ENCODE measurements at regions of chr4 and their contacts with region 1.

Region 1: DNA sequence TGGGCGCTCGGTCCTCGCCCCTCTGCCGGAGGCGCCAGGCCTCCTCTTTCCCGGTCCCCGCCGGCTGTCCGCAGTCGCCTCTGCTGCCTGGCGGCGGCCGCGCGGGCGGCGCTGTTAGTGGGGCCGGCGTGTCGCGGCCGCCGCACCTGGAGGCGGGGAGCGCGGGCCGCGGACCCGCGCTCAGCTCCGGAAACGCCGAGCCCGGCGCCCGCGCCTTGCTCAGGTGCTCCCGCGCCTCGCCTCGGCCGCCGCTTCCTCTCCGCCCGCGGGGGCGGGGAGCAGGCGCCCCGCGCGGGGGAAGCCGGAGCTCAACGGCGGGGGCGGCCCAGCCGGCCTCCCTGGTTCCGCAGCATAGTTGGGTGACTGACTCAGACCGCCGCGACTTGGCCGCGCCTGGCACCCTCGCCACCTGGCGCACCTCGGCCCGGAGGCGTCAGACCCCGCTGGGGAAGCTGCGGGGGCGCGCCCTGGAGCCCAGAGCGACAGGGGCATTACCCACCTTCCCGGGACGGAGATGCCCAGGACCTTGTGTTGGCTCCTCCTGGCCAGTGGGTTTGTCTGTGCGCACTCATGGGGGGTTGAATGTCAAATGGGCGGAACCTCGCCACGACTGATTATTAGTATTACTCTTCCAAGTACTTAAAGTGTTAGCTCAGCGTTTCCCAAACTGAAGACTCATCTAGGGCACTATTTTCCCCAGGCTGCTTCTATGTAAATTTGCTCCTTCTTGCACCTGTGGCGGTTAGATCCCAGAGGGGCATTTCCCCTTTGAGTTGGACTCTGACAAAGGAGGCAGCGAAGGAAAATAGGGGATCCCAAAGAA is at the start of gene ARAP2:
- DNase-seq: peak; percentile 84
- ATAC-seq: peak; percentile 72
- H3K4me3 Mint-ChIP-seq: peak within 1 kb of the TSS; percentile 87
- H3K27ac Mint-ChIP-seq: peak within 1 kb of the TSS; percentile 93
- H3K4me1 Mint-ChIP-seq: peaks cover 36% of the 10 kb centered on the region
- H3K27me3 Mint-ChIP-seq: no peaks in the 10 kb centered on the region
- total RNA-seq, gene ARAP2: 40.0 to 42.5 TPM

Region 2: DNA sequence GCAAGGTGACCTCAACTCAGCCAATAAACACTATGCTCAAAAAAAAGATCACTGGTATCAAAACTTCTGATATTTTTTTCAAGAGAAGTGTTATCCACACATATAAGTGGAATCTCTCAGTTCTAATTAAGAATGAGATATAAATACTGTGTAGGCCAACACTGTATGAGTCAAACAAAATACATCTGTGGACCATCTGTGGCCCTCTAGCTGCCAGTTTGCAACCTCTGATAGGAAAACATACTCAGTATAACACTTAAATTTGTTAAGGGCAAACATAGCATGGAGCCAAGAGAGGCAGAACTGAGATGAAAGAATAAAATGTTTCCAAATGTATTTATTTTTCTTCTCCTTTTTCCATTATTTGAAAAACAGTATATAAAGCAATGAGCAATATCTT is 377.4 kb before region 1 on chr4:
- CTCF ChIA-PET with region 1: no interaction called
- POLR2A ChIA-PET with region 1: no interaction called
- intact Hi-C with region 1: no loop called
- DNase-seq: no peak
- ATAC-seq: no peak
- H3K4me3 Mint-ChIP-seq: no peak overlapping the region
- H3K27ac Mint-ChIP-seq: no peak overlapping the region
- H3K4me1 Mint-ChIP-seq: no peaks in the 10 kb centered on the region
- H3K27me3 Mint-ChIP-seq: no peaks in the 10 kb centered on the region

Region 3: DNA sequence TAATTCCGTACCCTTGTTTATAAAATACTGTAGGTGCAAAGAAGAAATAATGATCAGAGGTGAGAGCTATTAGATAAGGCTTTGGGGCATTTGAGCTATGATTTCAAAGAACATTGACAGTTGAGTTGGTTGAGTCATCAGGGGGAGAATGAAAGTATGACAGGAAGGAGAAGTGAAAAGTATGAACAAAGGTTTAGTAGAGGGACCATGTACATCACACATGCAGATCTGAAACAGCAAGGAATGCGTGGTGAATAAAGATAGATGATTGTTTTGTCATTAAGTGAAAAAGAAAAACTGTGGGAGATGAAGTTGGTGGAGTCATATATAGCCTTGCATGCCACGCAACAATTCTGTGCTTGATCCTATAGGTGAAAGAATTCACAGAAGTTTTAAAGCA is 163.3 kb before region 1 on chr4:
- CTCF ChIA-PET with region 1: no interaction called
- POLR2A ChIA-PET with region 1: no interaction called
- intact Hi-C with region 1: loop called (anchors 5 kb)
- DNase-seq: peak; percentile 29
- ATAC-seq: peak; percentile 97
- H3K4me3 Mint-ChIP-seq: no peak overlapping the region
- H3K27ac Mint-ChIP-seq: no peak overlapping the region
- H3K4me1 Mint-ChIP-seq: peaks cover 5% of the 10 kb centered on the region
- H3K27me3 Mint-ChIP-seq: no peaks in the 10 kb centered on the region

Region 4: DNA sequence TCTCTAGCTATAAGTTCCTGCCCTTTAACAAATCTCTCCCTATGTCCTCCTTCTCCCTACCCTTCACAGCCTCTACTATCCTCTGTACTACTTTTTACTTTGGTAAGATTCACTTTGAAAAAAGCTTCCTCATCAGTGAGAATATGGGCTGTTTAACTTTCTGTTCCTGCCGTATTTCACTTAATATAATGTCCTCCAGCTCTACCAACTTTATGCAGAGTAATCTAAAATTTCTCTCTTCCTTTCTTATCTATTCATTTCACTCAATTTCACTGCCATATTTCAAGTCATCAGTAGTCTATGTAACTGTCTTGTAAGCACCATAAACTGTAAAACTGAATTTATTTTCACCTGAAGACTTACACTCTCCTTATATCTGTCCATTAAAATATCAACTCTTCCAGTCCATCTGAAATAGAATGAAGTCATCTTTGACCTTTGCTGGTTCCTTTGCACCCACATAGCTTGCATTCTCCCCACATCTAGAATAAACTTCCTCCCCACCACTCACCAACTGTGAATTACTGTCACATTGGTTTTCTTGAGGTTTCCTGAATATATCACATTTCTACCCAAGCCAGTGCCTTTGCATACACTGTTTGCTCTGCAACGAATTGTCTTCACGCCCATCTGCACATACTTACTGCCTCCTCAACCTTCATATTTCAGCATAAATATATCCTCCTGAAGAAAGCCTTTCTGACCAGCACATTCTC is 54.8 kb before region 1 on chr4:
- CTCF ChIA-PET with region 1: no interaction called
- POLR2A ChIA-PET with region 1: no interaction called
- intact Hi-C with region 1: loop called in 1 of 2 experiments (anchors 5 kb)
- DNase-seq: no peak
- ATAC-seq: peak; percentile 78
- H3K4me3 Mint-ChIP-seq: no peak overlapping the region
- H3K27ac Mint-ChIP-seq: peak overlapping the region; percentile 16
- H3K4me1 Mint-ChIP-seq: peaks cover 16% of the 10 kb centered on the region
- H3K27me3 Mint-ChIP-seq: no peaks in the 10 kb centered on the region

Region 5: GRCh38 chr4:36208893-36209473 is 35.5 kb before region 1 on chr4:
- CTCF ChIA-PET with region 1: interaction called, 4 read pairs
- POLR2A ChIA-PET with region 1: interaction called, 3 read pairs
- intact Hi-C with region 1: loop called (anchors 1 to 5 kb)
- DNase-seq: peak; percentile 51
- ATAC-seq: peak; percentile 72
- H3K4me3 Mint-ChIP-seq: no peak overlapping the region
- H3K27ac Mint-ChIP-seq: peak overlapping the region; percentile 44
- H3K4me1 Mint-ChIP-seq: peaks cover 49% of the 10 kb centered on the region
- H3K27me3 Mint-ChIP-seq: no peaks in the 10 kb centered on the region

Region 6: DNA sequence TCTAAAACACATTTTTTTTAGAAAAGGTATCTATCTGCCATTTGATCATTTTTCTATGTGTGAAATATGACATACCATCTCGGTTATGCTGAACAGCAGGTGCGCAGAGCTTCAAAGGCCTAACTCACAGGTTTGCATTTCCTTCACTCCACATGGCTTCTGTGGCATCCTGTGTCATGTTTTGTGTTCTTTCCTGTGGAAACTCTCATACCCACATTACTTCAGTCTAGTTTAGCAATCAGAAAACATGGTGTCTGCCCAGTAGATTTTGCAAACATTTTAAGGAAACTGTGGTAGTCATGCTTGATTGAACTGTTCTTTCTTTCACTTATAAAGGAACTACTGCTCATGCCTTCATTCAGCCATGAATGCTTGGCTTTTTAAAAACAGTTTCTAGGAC is 11.1 kb after region 1 on chr4:
- CTCF ChIA-PET with region 1: interaction called, 10 read pairs
- POLR2A ChIA-PET with region 1: interaction called, 12 read pairs
- intact Hi-C with region 1: loop called in 1 of 2 experiments (anchors 1 kb)
- DNase-seq: peak; percentile 73
- ATAC-seq: peak; percentile 87
- H3K4me3 Mint-ChIP-seq: peak overlapping the region; percentile 50
- H3K27ac Mint-ChIP-seq: peak overlapping the region; percentile 93
- H3K4me1 Mint-ChIP-seq: peaks cover 39% of the 10 kb centered on the region
- H3K27me3 Mint-ChIP-seq: no peaks in the 10 kb centered on the region

Measured in activated CD4-positive, alpha-beta T cell treated with anti-CD3 and anti-CD28 coated beads for 36 hours (primary cell).